AG04450 (cell line): ENCODE measurements at regions of chr9 and their contacts with region 1.

Region 1: DNA sequence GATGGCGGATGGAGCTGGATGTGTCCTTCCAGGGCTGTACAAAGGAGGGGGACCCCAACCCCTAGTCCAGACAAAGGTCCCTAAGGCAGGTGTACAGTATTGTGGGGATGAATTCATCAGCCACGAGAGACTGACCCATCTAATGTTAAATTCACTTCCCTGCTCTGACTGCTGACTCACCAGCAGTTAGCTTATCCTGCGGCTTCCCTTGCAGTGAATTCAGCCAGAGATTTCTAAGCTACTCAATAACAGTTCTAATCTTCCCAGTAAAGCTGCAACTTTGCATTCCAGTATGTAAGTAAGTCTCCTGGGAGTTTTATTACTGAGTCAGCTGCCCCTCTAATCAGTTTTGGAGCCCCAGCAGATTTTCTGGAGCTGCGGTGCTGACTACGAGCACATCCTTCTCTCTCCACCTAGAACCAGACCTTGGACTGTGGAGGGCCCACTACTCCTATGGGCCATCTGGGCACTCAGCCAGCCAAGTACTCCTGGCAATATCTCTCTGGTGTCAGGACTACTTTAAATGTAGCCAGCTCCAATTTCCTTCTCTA is 16.1 kb downstream of the B4GALT1 start:
- DNase-seq: peak; percentile 90
- H3K4me3 ChIP-seq: peak overlapping the region; percentile 35
- H3K27ac ChIP-seq: peak overlapping the region; percentile 85
- H3K27me3 ChIP-seq: no peaks in the 10 kb centered on the region
- CTCF ChIP-seq: no peak

Region 2: DNA sequence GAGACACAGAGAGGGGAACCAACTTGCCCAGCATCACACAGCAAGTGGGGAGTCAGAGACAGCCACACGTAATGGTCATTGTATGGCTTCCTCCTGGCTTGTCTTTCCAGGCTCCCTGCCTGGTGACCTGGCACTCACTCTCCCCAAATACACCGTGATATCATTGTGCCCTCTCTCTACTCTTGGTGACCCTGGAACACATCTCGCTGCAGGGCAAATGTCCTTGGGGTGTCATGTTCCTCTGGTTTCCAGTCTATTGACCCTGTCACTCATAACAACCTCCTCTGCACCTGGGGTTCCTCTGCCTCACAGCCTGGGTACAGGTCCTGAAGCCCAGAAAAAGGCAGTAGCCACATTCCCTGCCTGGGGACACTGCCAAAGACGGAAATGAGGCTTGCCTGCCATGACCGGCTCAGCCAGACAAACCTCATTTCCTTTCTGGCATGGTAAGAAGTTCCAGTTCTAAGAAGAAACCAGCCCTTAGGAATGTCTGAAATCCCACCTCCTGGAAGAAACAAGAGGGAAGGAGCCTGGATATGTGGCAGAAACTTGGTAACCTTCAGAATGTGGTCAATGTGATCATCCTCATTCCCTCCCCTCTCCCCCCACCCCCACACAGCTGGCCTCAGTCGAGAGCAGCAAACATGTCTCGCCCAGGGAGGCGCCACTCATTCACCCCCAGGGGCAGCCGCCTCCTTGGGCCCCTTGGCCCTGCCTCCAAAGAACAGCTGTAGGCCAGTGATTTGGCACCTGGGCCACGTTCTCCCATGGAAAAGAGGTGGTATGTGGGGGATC is 44.1 kb before region 1 on chr9:
- CTCF ChIA-PET with region 1: no interaction called
- POLR2A ChIA-PET with region 1: no interaction called
- DNase-seq: peak; percentile 71
- H3K4me3 ChIP-seq: no peak overlapping the region
- H3K27ac ChIP-seq: peak overlapping the region; percentile 93
- H3K27me3 ChIP-seq: no peaks in the 10 kb centered on the region
- CTCF ChIP-seq: no peak

Region 3: DNA sequence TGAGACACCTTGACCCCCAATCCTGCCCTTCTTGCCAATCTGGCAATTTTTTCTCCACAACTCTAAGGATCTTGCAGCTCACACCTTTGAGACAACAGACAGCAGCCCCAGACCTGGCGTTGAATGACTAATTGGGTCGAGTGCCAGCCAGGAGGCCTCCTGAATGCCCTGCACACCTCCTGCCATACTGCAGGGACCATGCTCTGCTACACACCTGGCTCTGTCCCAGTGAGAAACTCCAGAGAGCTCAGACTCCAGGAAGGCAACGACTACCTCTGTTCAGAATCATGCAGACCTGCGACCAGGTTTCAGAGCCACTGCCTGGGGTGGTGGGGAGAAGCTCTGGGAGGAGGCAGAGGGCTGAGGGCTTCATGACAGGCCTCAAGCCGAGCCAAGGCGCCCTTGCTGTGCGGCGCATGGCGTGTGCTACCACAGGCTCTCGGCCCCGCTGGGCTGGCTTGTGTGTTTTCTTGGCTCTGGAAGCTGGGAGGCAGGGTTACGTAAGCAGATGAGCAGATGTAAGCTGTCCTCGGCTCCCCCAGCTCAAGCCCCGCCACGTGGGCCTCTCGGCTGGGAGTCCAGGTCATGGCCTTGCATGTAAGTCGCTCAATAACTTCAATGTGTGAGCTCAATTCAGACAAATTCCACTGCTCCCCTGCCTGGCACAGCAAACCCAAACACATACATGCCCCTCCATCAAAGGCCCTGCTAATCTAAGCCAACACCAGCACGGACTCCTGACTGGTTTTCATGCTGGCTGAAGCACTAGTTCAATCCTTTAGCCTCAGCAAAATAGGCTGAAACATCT is 11.5 kb before region 1 on chr9:
- CTCF ChIA-PET with region 1: interaction called, 10 read pairs
- POLR2A ChIA-PET with region 1: interaction called, 12 read pairs
- DNase-seq: peak; percentile 90
- H3K4me3 ChIP-seq: peak overlapping the region; percentile 20
- H3K27ac ChIP-seq: peak overlapping the region; percentile 84
- H3K27me3 ChIP-seq: no peaks in the 10 kb centered on the region
- CTCF ChIP-seq: no peak

Region 4: GRCh38 chr9:33161011-33161588 is 10.0 kb after region 1 on chr9:
- CTCF ChIA-PET with region 1: interaction called, 5 read pairs
- POLR2A ChIA-PET with region 1: interaction called, 13 read pairs
- DNase-seq: peak; percentile 90
- H3K4me3 ChIP-seq: peak overlapping the region; percentile 31
- H3K27ac ChIP-seq: peak overlapping the region; percentile 95
- H3K27me3 ChIP-seq: no peaks in the 10 kb centered on the region
- CTCF ChIP-seq: no peak

Region 5: GRCh38 chr9:33290247-33291030 is 139.4 kb after region 1 on chr9 and contains the start of gene NFX1:
- CTCF ChIA-PET with region 1: no interaction called
- POLR2A ChIA-PET with region 1: no interaction called
- DNase-seq: peak; percentile 97
- H3K4me3 ChIP-seq: peak within 1 kb of the TSS; percentile 97
- H3K27ac ChIP-seq: peak within 1 kb of the TSS; percentile 100
- H3K27me3 ChIP-seq: no peaks in the 10 kb centered on the region
- CTCF ChIP-seq: no peak
- polyA plus RNA-seq, gene NFX1: 35.9 and 39.2 TPM in 2 replicates